PC-3 (cell line): ENCODE measurements at regions of chr9 and their contacts with region 1.

Region 1: DNA sequence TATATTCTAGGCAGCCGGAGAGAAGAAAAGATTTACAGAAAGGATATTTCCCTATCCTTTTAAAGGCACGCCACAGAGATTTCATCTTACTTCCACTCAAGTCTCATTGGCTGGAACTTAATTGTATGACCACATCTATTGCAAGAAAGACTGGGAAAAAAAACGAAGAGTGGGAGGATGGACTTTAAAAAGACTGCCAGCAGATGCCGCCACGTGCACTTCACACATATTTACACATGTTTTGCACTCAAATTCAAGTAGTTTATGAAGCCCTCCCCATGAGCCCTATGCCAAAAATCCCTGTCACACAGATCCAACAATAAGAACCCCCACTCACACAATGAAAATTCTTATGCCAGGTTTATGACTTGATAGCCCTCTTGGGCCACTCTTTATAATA is 138.5 kb upstream of the TYRP1 start:
- DNase-seq: peak; percentile 25
- ATAC-seq: peak; percentile 35; the same call in 1 of the 2 replicates
- H3K4me3 ChIP-seq: no peak overlapping the region
- H3K27ac ChIP-seq: no peak overlapping the region
- H3K4me1 ChIP-seq: no peaks in the 10 kb centered on the region
- H3K27me3 ChIP-seq: no peaks in the 10 kb centered on the region
- CTCF ChIP-seq: peak; percentile 49; the same call in 1 of the 2 replicates

Region 2: DNA sequence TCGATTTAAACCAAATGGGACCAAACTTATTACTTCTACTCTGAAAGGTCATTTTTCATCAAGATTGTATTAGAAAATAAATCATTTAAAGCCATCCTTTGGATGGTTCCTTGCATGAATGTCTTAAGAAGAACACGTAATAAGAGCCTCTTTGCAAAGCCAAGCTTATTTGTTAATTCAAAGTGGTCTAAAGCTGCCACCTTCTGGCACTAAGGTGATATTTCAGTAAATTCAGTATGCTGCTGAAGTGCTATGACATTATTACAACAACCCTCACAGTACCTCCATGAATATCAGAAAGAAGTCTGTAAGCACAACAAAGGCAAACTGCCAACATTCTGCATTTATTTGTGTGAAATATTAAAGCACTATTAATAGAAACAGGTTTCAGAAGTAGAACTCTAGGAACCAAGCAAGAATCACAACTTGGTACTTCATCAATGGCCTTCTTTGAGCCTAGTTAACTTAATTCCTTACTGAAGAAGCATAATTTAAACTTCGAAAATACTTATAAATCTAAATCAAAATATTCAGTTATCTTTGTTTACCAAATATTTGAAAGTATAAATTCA is 85.5 kb after region 1 on chr9:
- CTCF ChIA-PET with region 1: interaction called, 9 read pairs
- POLR2A ChIA-PET with region 1: no interaction called
- intact Hi-C with region 1: loop called (anchors 2 kb)
- DNase-seq: peak; percentile 57
- ATAC-seq: peak; percentile 53
- H3K4me3 ChIP-seq: no peak overlapping the region
- H3K27ac ChIP-seq: no peak overlapping the region
- H3K4me1 ChIP-seq: no peaks in the 10 kb centered on the region
- H3K27me3 ChIP-seq: no peaks in the 10 kb centered on the region
- CTCF ChIP-seq: peak; percentile 67